Right ventricle myocardium superior (tissue), 1 donor: ENCODE measurements at regions of chr1 and their contacts with region 1.

Region 1: GRCh38 chr1:34786521-34787325 is 5.7 kb downstream of the GJB3 start:
- DNase-seq: peak; percentile 77
- ATAC-seq: peak; percentile 90

Region 2: GRCh38 chr1:34709547-34709946 is 77.2 kb before region 1 on chr1:
- intact Hi-C with region 1: no loop called
- DNase-seq: no peak
- ATAC-seq: no peak

Region 3: DNA sequence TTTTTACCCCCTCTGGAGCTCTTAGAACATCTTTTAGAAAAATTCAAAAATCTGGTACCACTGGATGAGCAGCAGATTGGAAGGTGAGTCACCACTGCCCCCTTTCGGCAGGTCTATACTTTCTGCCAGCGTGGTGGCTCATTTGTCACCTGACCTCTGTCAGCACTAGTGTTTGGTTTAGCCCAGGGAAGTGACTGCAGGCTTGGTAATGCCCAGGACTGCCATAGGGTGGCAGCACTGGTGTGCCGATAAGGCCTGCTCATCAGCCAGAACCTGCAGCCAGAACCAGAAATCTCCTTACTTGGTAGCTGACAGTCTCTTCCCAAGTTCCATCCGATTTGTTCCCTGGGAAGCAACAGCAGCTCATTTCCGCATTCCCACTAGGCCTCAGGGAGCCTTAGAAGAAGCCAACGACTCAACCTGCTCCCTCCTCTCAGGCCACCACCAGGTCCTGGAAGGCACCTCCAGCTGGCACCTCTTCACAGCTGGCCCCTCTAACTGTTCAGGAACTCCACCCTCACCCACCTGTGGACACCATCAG is 66.0 kb after region 1 on chr1:
- intact Hi-C with region 1: loop called (anchors 2 kb)
- DNase-seq: peak; percentile 89
- ATAC-seq: peak; percentile 93

Region 4: DNA sequence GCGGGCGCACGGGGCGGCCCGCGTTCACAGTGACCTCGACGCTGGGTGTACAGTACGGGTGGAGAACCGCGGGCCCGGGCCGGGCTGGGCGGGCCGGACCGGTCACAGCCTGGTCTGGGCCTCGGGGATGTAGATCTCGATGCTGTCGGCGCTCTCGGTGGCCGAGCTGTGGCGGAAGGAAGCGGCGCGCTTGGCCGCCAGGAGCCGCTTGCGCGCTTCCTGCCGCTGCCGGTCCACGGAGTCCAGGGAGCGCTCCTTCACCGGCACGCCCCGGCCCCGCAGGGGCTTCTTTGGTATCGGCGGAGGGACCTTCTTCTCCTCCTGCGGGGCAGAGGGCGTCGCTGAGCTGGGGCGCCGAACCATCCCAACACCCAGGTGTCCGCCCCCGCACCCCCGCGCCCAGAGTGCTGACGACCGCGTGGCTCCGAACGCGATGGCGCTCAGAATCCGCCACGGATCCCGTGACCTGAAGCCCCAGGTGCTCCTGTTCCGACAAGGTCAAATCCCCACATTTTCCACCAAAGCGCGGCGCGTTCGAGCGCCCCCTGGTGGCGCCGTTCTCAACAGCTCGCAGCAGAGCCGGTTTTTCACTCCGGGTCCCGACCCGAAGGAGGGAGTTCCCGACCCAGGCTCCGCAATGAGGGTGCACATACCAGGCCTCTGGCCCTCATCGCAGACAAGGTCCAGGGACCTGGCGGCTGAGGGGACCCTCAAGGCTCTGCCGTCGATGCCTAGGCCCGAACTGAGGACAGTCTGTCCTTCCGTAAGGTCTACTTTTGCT is 79.4 kb after region 1 on chr1:
- intact Hi-C with region 1: loop called (anchors 5 kb)
- DNase-seq: peak; percentile 94
- ATAC-seq: peak; percentile 91